ENCODE measurements at regions of chr2 and their contacts with region 1.

Region 1: DNA sequence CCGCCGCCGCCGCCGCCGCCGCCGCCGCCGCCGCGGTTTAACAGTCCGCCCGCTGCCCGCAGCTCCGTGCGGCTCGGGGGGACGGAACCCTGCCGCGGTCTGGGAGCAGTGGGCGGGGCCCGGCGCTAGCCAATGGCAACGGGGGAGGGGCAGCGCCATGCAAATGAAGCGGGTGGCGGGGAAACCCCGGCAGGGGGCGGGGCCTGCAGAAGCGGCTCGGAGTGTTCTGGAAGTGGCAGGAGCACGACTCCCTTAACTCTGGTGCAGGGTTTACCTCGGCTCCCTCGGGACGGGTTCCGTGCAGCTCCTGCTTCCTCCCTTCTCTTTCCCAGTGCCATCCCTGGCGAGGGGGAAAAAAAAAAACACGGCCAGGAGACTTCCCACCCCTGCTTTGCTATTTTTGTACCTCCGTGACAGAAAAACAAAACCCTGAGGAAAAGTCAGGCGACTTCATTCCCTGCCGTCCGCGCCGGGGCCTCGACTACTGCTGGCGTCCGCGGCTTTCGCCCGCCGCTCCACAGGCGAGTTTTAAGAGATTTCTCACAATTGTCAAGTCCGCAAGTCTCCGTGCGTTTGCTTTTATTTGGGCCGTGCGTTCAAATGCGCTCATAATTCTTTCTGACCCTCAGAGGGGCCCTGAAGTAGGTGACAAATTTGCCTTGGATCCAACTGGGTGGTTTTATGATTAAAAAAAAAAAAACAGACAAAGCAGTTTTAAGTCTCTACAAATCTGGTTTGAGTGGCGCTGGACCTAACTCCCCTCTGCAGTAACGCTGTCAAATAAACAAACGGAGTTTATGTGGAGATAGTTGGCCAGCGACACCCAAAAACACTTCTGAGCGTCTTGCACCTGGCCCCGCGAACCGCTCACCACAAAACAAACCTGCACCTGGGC is at the start of gene KANSL1L:
- DNase-seq: peak; percentile 95
- ATAC-seq: peak; percentile 84
- H3K4me3 ChIP-seq: peak within 1 kb of the TSS; percentile 75
- H3K27ac ChIP-seq: peak within 1 kb of the TSS; percentile 60
- H3K4me1 ChIP-seq: peaks cover 17% of the 10 kb centered on the region
- H3K27me3 ChIP-seq: no peaks in the 10 kb centered on the region; the same call in 1 of the 2 replicates
- CTCF ChIP-seq: no peak
- total RNA-seq, gene KANSL1L: 2.2 and 2.3 TPM in 2 replicates

Region 2: DNA sequence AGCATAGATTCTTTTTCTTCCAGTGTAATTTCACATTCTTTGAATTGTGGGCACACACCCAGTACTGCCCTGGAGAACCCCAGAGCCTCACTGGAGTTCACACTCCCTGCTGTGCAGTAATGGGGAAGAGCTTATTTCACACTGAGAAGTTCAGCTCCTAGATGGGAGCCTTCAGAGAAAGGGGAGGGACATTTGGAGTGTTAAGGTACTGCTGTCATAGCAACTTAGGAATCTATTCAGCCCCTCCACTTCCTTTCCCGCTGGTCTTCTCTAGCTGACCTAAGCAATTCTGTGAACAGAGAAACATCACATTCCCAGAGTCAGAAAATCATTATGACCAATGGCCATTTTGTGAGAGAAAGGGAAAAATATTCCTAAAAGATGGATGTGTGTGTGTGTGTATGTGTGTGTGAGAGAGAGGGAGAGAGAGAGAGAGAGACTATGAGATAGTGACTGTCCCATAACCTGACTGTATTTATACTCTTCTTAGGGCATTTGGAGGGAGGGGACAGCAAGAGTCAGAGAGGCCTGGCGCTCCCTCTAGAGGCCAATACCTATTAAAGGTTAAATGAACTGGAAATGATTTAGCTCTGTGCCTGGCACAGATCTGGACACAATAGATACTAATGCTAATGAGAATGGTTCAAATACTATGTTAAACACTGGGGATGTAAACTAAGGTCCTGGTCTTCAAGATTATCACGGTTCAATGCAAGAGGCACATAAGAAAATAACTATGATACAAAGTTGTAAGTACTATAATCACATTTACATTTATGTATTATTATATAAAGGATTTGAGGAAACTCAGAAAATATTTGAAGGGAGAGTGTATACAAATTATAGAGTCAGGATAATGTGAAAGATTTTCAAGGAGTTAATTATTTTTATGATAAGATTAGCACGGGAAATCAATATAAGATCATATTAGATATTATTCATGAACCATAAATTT is 210.6 kb before region 1 on chr2:
- CTCF ChIA-PET with region 1: no interaction called
- POLR2A ChIA-PET with region 1: no interaction called
- intact Hi-C with region 1: no loop called
- DNase-seq: peak; percentile 68
- ATAC-seq: peak; percentile 77
- H3K4me3 ChIP-seq: no peak overlapping the region
- H3K27ac ChIP-seq: no peak overlapping the region
- H3K4me1 ChIP-seq: no peaks in the 10 kb centered on the region
- H3K27me3 ChIP-seq: peaks cover 46% of the 10 kb centered on the region
- CTCF ChIP-seq: peak; percentile 87

Region 3: GRCh38 chr2:210002158-210003157 is 169.1 kb before region 1 on chr2 and contains the start of gene RPE:
- CTCF ChIA-PET with region 1: no interaction called
- POLR2A ChIA-PET with region 1: no interaction called
- intact Hi-C with region 1: loop called (anchors 2 kb)
- DNase-seq: peak; percentile 95
- ATAC-seq: peak; percentile 99
- H3K4me3 ChIP-seq: peak within 1 kb of the TSS; percentile 84
- H3K27ac ChIP-seq: peak within 1 kb of the TSS; percentile 26
- H3K4me1 ChIP-seq: peaks cover 23% of the 10 kb centered on the region
- H3K27me3 ChIP-seq: no peaks in the 10 kb centered on the region
- CTCF ChIP-seq: no peak
- total RNA-seq, gene RPE: 60.5 and 77.3 TPM in 2 replicates

Region 4: GRCh38 chr2:210086292-210086691 is 85.3 kb before region 1 on chr2:
- CTCF ChIA-PET with region 1: no interaction called
- POLR2A ChIA-PET with region 1: no interaction called
- intact Hi-C with region 1: loop called (anchors 5 kb)
- DNase-seq: peak; percentile 8
- ATAC-seq: no peak
- H3K4me3 ChIP-seq: no peak overlapping the region
- H3K27ac ChIP-seq: no peak overlapping the region
- H3K4me1 ChIP-seq: 0 out of 2 replicates have a peak, but pooled peaks cover 3% of the 10 kb centered on the region
- H3K27me3 ChIP-seq: no peaks in the 10 kb centered on the region
- CTCF ChIP-seq: no peak

Region 5: GRCh38 chr2:210476194-210477128 is 304.9 kb after region 1 on chr2 and contains the start of gene LANCL1:
- CTCF ChIA-PET with region 1: no interaction called
- POLR2A ChIA-PET with region 1: no interaction called
- intact Hi-C with region 1: loop called (anchors 2 kb)
- DNase-seq: peak; percentile 88
- ATAC-seq: peak; percentile 99
- H3K4me3 ChIP-seq: peak within 1 kb of the TSS; percentile 91
- H3K27ac ChIP-seq: no peak within 1 kb of the TSS
- H3K4me1 ChIP-seq: peaks cover 11% of the 10 kb centered on the region; the same call in 1 of the 2 replicates
- H3K27me3 ChIP-seq: no peaks in the 10 kb centered on the region
- CTCF ChIP-seq: no peak
- total RNA-seq, gene LANCL1: 16.0 and 19.0 TPM in 2 replicates